ENCODE measurements at regions of chr22 and their contacts with region 1.

Region 1: GRCh38 chr22:26483439-26484359 is at the starts of genes HPS4 and SRRD:
- DNase-seq: peak; percentile 92
- ATAC-seq: peak; percentile 84
- H3K4me3 Mint-ChIP-seq: peak within 1 kb of the TSS; percentile 93
- H3K27ac Mint-ChIP-seq: peak within 1 kb of the TSS; percentile 88
- H3K4me1 Mint-ChIP-seq: peaks cover 67% of the 10 kb centered on the region
- H3K27me3 Mint-ChIP-seq: no peaks in the 10 kb centered on the region
- total RNA-seq, gene HPS4: 39.3 to 41.2 TPM
- total RNA-seq, gene SRRD: 17.5 to 22.6 TPM

Region 2: DNA sequence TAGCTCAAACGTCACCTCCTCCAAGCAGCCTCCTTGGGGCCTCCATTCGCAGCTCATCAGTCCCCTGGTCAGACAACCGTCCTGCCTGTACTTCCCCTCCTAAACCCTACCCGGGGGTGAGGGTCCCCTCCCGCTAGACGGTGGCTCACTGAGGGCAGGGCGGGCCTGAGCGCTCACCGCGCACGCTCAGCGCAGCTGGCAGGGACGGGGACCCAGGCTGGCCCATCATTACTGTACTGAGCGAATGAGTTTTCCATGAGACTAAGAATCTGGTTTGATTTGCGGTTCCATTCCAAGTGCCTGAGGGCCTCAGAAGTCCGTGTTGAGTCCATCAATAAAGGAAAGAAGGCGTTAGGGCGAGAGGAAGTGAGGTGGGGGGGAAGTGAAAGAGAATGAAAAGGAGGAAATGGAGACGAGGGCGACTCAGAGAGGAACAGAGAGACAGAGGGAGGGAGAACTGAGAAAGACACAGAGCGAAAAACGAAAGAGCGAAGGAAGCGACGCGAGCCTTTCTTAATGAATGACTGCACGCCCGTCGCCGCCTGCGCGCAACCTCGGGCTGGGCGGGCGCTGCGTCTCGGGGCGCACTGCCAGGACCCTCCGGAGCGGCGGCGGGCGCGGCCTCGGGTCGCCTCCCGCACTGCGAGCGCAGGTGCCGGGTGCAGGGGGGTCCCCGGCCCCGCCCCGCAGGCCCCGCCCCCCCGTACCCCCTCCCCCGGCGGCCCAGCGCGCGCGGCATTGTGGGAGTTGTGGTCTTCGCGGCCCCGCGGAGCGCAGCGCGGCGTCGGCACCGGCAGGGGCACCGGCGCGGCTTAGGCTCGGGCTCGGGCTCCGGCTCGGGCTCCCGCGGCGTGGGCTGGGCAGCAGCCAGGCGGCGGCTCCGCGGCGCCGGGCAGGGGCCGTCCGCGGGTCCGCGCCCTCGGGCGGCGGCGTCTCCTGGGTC is 54.9 kb before region 1 on chr22 and contains the start of gene ASPHD2:
- CTCF ChIA-PET with region 1: interaction called, 26 read pairs
- DNase-seq: peak; percentile 86
- ATAC-seq: peak; percentile 89
- H3K4me3 Mint-ChIP-seq: peak within 1 kb of the TSS; percentile 96
- H3K27ac Mint-ChIP-seq: peak within 1 kb of the TSS; percentile 97
- H3K4me1 Mint-ChIP-seq: peaks cover 54% of the 10 kb centered on the region
- H3K27me3 Mint-ChIP-seq: peaks cover 10% of the 10 kb centered on the region
- total RNA-seq, gene ASPHD2: 15.3 to 17.0 TPM

Region 3: DNA sequence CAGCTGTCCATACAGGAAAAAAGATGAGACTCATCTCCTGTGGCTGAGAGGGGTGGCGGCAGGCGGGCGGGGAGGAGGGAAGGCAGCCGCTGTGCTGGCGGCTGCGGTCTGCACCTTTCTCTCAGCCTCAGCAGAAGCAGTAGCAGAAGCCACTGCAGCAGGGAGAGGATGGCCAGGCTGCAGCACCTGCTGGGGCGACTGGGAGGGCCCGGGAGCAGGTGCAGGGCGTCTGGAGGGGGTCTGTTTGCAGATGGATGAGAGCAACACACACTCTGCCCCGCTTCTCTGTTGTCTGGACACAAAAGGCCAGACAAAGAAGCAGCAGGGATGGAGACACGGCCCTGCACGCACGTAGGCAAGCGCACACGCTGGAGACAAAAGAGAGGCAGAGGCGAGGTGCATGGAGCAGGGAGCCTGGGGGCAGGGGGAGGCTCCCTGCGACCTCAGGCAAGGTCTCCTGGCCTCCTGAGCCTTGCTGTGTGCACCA is 164.4 kb after region 1 on chr22:
- CTCF ChIA-PET with region 1: no interaction called
- DNase-seq: peak; percentile 78
- ATAC-seq: peak; percentile 61
- H3K4me3 Mint-ChIP-seq: peak overlapping the region; percentile 32
- H3K27ac Mint-ChIP-seq: peak overlapping the region; percentile 71
- H3K4me1 Mint-ChIP-seq: peaks cover 87% of the 10 kb centered on the region
- H3K27me3 Mint-ChIP-seq: peaks cover 5% of the 10 kb centered on the region

Region 4: DNA sequence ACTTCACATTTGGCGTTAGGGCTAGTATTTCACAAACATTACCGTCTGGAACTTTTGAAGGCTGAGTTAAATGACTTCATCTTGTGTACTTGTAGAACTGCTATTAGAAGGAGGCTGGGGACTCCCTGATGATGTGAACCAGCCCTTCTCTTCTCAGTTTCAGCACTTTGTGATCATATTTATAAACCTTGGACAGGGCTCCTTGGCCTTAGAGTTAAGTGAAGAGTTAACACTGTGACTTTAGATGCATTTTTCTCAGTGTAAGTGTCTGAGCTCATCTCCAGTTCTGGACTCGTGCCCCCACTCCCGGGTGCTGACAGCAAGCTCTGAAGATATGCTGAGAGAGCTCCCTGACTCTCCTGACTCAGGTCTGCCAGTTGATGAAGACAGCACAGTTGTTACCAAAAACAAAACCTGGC is 182.1 kb after region 1 on chr22:
- CTCF ChIA-PET with region 1: interaction called, 26 read pairs
- DNase-seq: no peak
- ATAC-seq: peak; percentile 14
- H3K4me3 Mint-ChIP-seq: no peak overlapping the region
- H3K27ac Mint-ChIP-seq: peak overlapping the region; percentile 86
- H3K4me1 Mint-ChIP-seq: peaks cover 76% of the 10 kb centered on the region
- H3K27me3 Mint-ChIP-seq: no peaks in the 10 kb centered on the region

Region 5: GRCh38 chr22:26672590-26673468 is 189.1 kb after region 1 on chr22:
- CTCF ChIA-PET with region 1: interaction called, 17 read pairs
- DNase-seq: peak; percentile 98
- ATAC-seq: peak; percentile 67
- H3K4me3 Mint-ChIP-seq: peak overlapping the region; percentile 93
- H3K27ac Mint-ChIP-seq: peak overlapping the region; percentile 97
- H3K4me1 Mint-ChIP-seq: peaks cover 70% of the 10 kb centered on the region
- H3K27me3 Mint-ChIP-seq: no peaks in the 10 kb centered on the region

Region 6: GRCh38 chr22:26777156-26777801 is 293.6 kb after region 1 on chr22:
- CTCF ChIA-PET with region 1: no interaction called
- DNase-seq: no peak
- ATAC-seq: no peak
- H3K4me3 Mint-ChIP-seq: no peak overlapping the region
- H3K27ac Mint-ChIP-seq: no peak overlapping the region
- H3K4me1 Mint-ChIP-seq: no peaks in the 10 kb centered on the region
- H3K27me3 Mint-ChIP-seq: no peaks in the 10 kb centered on the region

Measured in activated CD8-positive, alpha-beta memory T cell treated with anti-CD3 and anti-CD28 coated beads, Interleukin-2, amount 10 ng/mL, durations not matched to agents 7 days and 5 days (primary cell).